ENCODE measurements at regions of chr21 and their contacts with region 1.

Region 1: DNA sequence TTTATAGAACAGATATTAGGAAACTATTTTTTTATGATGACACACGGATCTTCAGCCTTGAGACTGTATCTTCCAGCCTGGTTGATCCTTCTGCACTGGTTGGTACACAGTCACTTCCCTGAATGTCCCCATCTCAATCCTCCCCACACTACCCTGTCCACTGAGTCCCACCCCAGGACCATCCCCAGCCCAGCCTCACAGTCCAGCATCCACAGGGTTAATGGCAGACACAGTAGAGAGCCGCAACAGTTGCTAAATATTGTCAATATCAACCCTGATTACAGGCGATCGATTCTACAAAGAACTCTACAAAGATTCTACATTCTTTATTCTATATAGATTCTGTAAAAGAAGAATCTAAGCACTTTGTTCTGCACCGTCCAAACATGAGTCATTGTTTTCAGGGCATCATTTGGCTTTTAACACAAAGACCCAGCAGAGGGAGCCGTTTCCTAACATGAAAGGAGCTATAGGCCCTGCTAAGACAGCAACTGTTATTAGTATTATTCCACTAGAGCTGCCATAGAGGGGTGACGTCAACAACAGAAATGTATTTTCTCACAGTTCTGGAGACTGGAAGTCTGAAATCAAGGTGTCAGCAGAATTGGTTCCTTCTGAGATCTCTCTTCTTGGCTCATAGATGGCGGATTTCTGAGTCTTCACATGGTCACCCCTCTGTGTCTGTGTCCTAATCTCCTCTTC is 30.1 kb upstream of the IFNAR2 start:
- DNase-seq: peak; percentile 88
- ATAC-seq: peak; percentile 90

Region 2: GRCh38 chr21:33374450-33375096 is 174.9 kb after region 1 on chr21:
- intact Hi-C with region 1: loop called (anchors 10 kb)
- DNase-seq: peak; percentile 76
- ATAC-seq: peak; percentile 81

Region 3: GRCh38 chr21:33434770-33435360 is 235.2 kb after region 1 on chr21:
- intact Hi-C with region 1: loop called (anchors 5 kb)
- DNase-seq: no peak
- ATAC-seq: peak; percentile 91